Tibial artery (tissue), 4 donors: ENCODE measurements at regions of chr1 and their contacts with region 1.

Region 1: GRCh38 chr1:162023547-162024501 is at the start of gene OLFML2B:
- DNase-seq: peak; percentile 81 to 91
- H3K4me3 ChIP-seq: peak within 1 kb of the TSS; percentile 68 to 70
- H3K27ac ChIP-seq: peak within 1 kb of the TSS; percentile 82
- H3K4me1 ChIP-seq: peaks cover 12 to 48% (median 33%) of the 10 kb centered on the region in 4 donors
- H3K27me3 ChIP-seq: no peaks in the 10 kb centered on the region
- CTCF ChIP-seq: peak; percentile 43 to 50

Region 2: GRCh38 chr1:161869291-161869690 is 154.5 kb before region 1 on chr1:
- intact Hi-C with region 1: loop called (anchors 2 kb)
- DNase-seq: no peak
- H3K4me3 ChIP-seq: no peak overlapping the region
- H3K27ac ChIP-seq: no peak overlapping the region
- H3K4me1 ChIP-seq: peaks cover 0 to 17% (median 0%) of the 10 kb centered on the region in 4 donors
- H3K27me3 ChIP-seq: no peaks in the 10 kb centered on the region
- CTCF ChIP-seq: no peak

Region 3: GRCh38 chr1:161994175-161994668 is 29.6 kb before region 1 on chr1:
- intact Hi-C with region 1: no loop called
- DNase-seq: peak; percentile 62 to 86
- H3K4me3 ChIP-seq: no peak overlapping the region
- H3K27ac ChIP-seq: peak overlapping the region in 1 of 2 donors; percentile 28
- H3K4me1 ChIP-seq: peaks cover 0 to 20% (median 0%) of the 10 kb centered on the region in 4 donors
- H3K27me3 ChIP-seq: no peaks in the 10 kb centered on the region
- CTCF ChIP-seq: no peak

Region 4: DNA sequence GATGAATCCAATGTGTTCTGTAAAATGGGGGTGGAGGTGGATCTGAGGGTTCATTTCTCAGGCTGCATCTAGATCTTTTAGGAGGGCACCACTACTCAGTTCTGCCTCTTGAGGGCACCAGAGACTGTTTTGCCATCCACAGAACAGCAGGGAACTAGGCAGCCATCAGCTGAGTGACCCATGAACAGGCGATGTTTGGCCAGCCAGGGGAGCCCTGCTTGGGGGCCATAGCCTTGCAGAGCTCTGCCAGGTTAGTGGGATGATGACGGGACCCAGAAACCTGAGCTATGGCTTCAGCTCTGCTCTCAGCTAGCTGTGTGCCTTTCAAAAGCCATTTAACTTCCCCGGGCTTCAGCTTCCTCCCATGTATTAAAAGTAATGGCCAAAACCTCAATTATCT is 32.2 kb after region 1 on chr1:
- intact Hi-C with region 1: no loop called
- DNase-seq: peak; percentile 53 to 68
- H3K4me3 ChIP-seq: no peak overlapping the region
- H3K27ac ChIP-seq: no peak overlapping the region
- H3K4me1 ChIP-seq: peaks cover 0 to 3% (median 0%) of the 10 kb centered on the region in 4 donors
- H3K27me3 ChIP-seq: peaks cover 0 to 12% of the 10 kb centered on the region in 2 donors
- CTCF ChIP-seq: peak; percentile 82 to 97